Posterior vena cava (tissue), 2 donors: ENCODE measurements at regions of chr2 and their contacts with region 1.

Region 1: DNA sequence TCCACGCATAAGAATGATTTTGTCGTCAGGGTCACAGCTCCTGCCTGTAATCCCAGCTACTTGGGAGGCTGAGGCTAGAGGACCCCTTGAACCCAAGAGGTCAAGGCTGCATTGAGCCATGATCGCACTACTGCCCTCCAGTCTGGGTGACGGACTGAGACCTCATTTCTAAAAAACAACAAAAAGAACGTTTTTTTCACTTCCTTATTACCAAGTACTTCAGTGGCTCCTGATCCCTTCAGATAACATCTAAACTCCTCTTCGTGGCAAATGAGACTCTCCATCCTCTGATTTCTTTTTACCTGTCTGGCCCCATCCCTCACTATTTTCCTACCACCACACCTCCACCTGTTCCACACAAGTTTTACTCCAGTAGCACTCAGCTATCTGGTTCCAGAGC is 105.4 kb upstream of the TLK1 start:
- DNase-seq: no peak

Region 2: DNA sequence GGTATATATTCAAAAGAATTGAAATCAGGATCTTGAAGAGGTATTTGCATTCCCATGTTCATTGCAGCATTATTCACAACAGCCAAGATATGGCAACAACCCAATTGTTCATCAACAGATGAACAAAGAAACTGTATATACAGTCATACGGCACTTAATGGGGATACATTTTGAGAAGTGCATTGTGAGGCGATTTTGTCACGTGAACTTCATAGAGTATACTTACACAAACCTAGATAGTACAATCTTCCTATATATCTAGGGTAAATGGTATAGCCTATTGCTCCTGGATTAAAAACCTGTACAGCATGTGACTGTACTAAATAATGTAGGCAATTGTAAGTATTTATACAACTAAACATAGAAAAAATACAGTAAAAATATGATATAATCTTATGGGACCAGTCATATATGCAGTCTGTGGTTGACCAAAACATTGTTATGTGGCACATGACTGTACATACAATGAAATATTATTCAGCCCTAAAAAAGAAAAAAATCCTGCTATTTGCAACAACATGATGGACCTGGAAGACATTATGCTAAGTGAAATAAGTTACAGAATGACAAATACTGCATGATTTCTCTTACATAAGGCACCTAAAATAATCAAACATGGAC is 1796.0 kb before region 1 on chr2:
- intact Hi-C with region 1: loop called in 1 of 2 experiments (anchors 5 kb)
- DNase-seq: no peak

Region 3: DNA sequence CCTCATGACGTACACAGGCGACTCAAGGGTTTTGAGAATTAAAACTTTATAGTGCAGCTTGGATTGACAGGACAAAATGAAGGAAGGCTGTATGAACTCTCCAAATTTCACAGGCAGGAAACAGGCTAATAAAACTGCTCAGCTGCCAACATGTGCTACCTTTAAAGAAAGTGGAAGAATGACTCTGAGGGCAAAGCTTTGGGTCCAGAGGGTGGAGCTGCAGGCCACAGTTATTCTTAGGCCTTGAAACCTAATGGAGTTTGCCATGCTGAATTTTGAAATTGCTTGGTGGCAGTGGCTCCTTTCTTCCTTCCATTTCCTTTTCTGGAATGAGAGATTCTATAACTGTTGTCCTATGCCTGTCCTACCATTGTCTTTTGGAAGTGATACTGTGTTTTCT is 691.0 kb after region 1 on chr2:
- intact Hi-C with region 1: no loop called
- DNase-seq: no peak